Naive thymus-derived CD4-positive, alpha-beta T cell (primary cell): ENCODE measurements at regions of chr14 and their contacts with region 1.

Region 1: DNA sequence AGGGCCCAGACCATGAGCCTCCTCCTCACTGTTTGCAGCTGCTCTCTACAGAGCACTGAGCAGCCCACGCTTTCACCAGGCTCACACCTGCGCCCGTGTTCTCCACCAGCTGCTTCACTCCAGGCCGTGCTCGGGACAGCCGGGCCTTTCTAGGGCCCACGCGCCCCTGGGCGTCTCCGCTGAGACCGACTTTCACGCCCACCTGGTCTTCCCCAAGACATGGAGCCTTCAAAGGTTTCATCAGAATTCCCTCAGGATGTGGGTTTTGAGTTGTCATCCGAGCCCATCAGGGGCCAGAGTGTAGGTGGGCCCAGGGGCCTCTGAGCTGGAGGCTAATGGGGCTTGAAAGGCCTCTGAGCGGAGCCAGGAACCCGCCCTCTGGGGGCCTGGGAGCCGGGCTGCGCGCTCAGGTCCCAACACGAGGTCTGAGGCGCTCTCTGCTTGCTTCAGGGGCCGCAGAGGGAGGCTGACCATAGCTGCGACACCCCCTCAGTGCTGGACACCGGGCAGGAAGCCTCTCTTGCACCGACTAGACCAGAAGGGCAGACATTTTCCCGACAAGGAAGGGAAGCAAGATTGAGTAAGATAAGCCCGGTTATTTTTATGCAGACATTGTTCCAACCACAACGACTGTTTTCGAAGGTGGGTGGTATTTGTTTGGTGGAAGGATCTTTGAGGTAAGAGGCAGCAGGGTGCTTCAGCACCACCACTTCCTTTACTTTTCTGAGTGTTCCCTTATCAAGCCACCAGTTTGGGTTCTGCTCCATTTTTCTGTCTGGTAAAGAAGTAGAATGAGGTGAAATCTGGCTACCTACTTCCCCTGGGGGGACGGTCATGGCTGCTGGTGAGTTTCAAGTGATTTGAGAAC is 125.0 kb upstream of the FUT8 start:
- DNase-seq: peak in 8 of 9 donors; percentile 51 to 80 (median 75)
- ATAC-seq: peak; percentile 84
- H3K4me3 ChIP-seq: peak overlapping the region; percentile 27
- H3K4me3 Mint-ChIP-seq: peak overlapping the region; percentile 75 to 91 (median 85)
- H3K27ac ChIP-seq: peak overlapping the region; percentile 69
- H3K27ac Mint-ChIP-seq: peak overlapping the region; percentile 90 to 100 (median 98)
- H3K4me1 ChIP-seq: peaks cover 49 to 59% of the 10 kb centered on the region in 2 donors
- H3K4me1 Mint-ChIP-seq: peaks cover 51 to 90% (median 77%) of the 10 kb centered on the region in 7 donors
- H3K27me3 ChIP-seq: no peaks in the 10 kb centered on the region
- H3K27me3 Mint-ChIP-seq: no peaks in the 10 kb centered on the region

Region 2: DNA sequence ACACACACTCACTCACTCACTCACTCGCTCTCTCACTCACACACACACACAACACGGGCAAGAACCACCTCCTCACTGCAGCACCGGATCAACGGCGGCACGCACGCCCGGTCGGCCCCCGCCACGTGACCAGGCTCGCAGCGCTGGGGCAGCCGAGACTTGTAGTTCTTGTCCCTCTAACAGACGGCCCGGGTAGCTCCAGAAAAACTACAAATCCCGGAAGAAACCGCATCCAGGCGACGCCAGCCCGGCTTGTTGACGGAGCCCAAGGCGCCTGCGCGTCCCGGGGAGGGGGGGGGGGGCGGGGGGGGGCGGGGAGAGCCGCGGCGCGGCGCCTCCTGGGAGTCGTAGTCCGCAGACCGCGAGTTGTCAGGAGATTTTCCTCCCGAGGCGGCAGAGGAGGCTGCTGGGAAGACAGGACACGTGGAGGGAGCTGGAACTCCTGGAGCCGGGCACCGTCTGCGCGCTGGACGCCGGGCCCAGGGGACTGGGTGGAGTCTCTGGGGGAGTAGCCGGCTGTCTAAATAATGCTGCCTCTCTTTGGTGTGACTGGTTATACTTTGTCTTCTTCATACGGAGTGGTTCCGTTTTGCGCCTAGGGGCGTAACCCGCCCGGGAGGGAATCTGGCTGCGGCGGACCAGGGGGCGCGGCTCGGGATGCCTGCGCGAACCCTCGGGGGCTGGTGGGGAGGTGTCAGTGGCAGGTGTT is 184.9 kb before region 1 on chr14 and contains the start of gene MAX:
- CTCF ChIA-PET with region 1: no interaction called
- POLR2A ChIA-PET with region 1: no interaction called
- intact Hi-C with region 1: loop called (anchors 1 to 5 kb)
- DNase-seq: peak; percentile 88 to 100 (median 99)
- ATAC-seq: peak; percentile 95
- H3K4me3 ChIP-seq: peak within 1 kb of the TSS; percentile 96
- H3K4me3 Mint-ChIP-seq: peak within 1 kb of the TSS; percentile 87 to 97 (median 91)
- H3K27ac ChIP-seq: peak within 1 kb of the TSS; percentile 100
- H3K27ac Mint-ChIP-seq: peak within 1 kb of the TSS; percentile 91 to 99 (median 94)
- H3K4me1 ChIP-seq: peaks cover 17 to 34% of the 10 kb centered on the region in 2 donors
- H3K4me1 Mint-ChIP-seq: peaks cover 28 to 43% (median 42%) of the 10 kb centered on the region in 7 donors
- H3K27me3 ChIP-seq: no peaks in the 10 kb centered on the region
- H3K27me3 Mint-ChIP-seq: peaks cover 0 to 12% (median 0%) of the 10 kb centered on the region in 5 donors
- total RNA-seq, gene MAX: 164 to 236 (median 202) TPM

Region 3: GRCh38 chr14:65222440-65222858 is 65.0 kb before region 1 on chr14:
- CTCF ChIA-PET with region 1: interaction called, 4 read pairs
- POLR2A ChIA-PET with region 1: interaction called, 5 read pairs
- intact Hi-C with region 1: loop called in 1 of 2 experiments (anchors 2 kb)
- DNase-seq: peak in 8 of 9 donors; percentile 19 to 57 (median 44)
- ATAC-seq: peak; percentile 84
- H3K4me3 ChIP-seq: no peak overlapping the region
- H3K4me3 Mint-ChIP-seq: peak overlapping the region in 5 of 10 donors; percentile 11 to 56 (median 25)
- H3K27ac ChIP-seq: no peak overlapping the region
- H3K27ac Mint-ChIP-seq: peak overlapping the region in 3 of 9 donors; percentile 43 to 83 (median 67)
- H3K4me1 ChIP-seq: peaks cover 4 to 18% of the 10 kb centered on the region in 2 donors
- H3K4me1 Mint-ChIP-seq: peaks cover 11 to 55% (median 44%) of the 10 kb centered on the region in 7 donors
- H3K27me3 ChIP-seq: no peaks in the 10 kb centered on the region
- H3K27me3 Mint-ChIP-seq: no peaks in the 10 kb centered on the region

Region 4: GRCh38 chr14:65302571-65303189 is 15.2 kb after region 1 on chr14:
- CTCF ChIA-PET with region 1: interaction called, 3 read pairs
- POLR2A ChIA-PET with region 1: interaction called, 6 read pairs
- intact Hi-C with region 1: loop called (anchors 1 to 2 kb)
- DNase-seq: peak in 1 of 9 donors; percentile 56
- ATAC-seq: peak; percentile 38
- H3K4me3 ChIP-seq: no peak overlapping the region
- H3K4me3 Mint-ChIP-seq: peak overlapping the region in 3 of 10 donors; percentile 4 to 51 (median 48)
- H3K27ac ChIP-seq: no peak overlapping the region
- H3K27ac Mint-ChIP-seq: peak overlapping the region in 7 of 9 donors; percentile 15 to 93 (median 47)
- H3K4me1 ChIP-seq: peaks cover 16 to 25% of the 10 kb centered on the region in 2 donors
- H3K4me1 Mint-ChIP-seq: peaks cover 37 to 76% (median 71%) of the 10 kb centered on the region in 7 donors
- H3K27me3 ChIP-seq: no peaks in the 10 kb centered on the region
- H3K27me3 Mint-ChIP-seq: no peaks in the 10 kb centered on the region

Region 5: DNA sequence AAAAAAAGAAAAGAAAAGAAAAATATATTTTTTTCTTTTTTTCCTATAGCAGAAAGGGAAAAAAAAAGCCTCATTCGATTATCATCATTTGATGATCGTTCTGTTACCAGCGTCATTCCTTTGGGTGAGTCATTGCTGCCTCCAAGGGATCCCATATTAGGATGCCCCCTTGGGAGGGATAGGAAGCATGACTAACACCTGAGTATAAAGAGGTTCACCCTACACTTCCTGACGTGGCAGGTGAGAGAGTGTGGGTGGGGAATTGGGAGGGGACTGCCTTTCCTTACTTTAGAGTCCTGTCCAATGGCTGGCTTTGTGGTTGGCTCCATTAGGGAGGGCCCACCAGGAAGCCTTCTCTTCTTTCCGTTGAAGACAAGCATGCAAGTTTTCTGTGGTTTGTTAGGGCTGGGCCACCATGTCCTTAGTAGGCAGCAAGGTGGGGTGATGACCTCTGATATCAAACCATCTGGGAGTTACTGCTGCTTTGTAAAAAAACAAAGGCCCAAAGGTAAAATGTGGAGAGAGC is 68.9 kb after region 1 on chr14:
- CTCF ChIA-PET with region 1: interaction called, 3 read pairs
- POLR2A ChIA-PET with region 1: no interaction called
- intact Hi-C with region 1: loop called (anchors 1 to 5 kb)
- DNase-seq: peak in 3 of 9 donors; percentile 4 to 48 (median 16)
- ATAC-seq: peak; percentile 38
- H3K4me3 ChIP-seq: no peak overlapping the region
- H3K4me3 Mint-ChIP-seq: peak overlapping the region in 2 of 10 donors; percentile 21 to 52
- H3K27ac ChIP-seq: no peak overlapping the region
- H3K27ac Mint-ChIP-seq: peak overlapping the region in 6 of 9 donors; percentile 31 to 82 (median 62)
- H3K4me1 ChIP-seq: peaks cover 5 to 13% of the 10 kb centered on the region in 2 donors
- H3K4me1 Mint-ChIP-seq: peaks cover 6 to 73% (median 16%) of the 10 kb centered on the region in 7 donors
- H3K27me3 ChIP-seq: no peaks in the 10 kb centered on the region
- H3K27me3 Mint-ChIP-seq: no peaks in the 10 kb centered on the region

Region 6: GRCh38 chr14:66070509-66071319 is 783.2 kb after region 1 on chr14:
- CTCF ChIA-PET with region 1: no interaction called
- POLR2A ChIA-PET with region 1: no interaction called
- intact Hi-C with region 1: loop called in 1 of 2 experiments (anchors 2 kb)
- DNase-seq: peak; percentile 41 to 76 (median 62)
- ATAC-seq: peak; percentile 91
- H3K4me3 ChIP-seq: no peak overlapping the region
- H3K4me3 Mint-ChIP-seq: no peak overlapping the region
- H3K27ac ChIP-seq: no peak overlapping the region
- H3K27ac Mint-ChIP-seq: peak overlapping the region in 1 of 9 donors; percentile 28
- H3K4me1 ChIP-seq: no peaks in the 10 kb centered on the region
- H3K4me1 Mint-ChIP-seq: peaks cover 4 to 12% (median 8%) of the 10 kb centered on the region in 7 donors
- H3K27me3 ChIP-seq: no peaks in the 10 kb centered on the region
- H3K27me3 Mint-ChIP-seq: peaks cover 0 to 20% (median 6%) of the 10 kb centered on the region in 5 donors